GM13976 (cell line): ENCODE measurements at regions of chr1 and their contacts with region 1.

Region 1: DNA sequence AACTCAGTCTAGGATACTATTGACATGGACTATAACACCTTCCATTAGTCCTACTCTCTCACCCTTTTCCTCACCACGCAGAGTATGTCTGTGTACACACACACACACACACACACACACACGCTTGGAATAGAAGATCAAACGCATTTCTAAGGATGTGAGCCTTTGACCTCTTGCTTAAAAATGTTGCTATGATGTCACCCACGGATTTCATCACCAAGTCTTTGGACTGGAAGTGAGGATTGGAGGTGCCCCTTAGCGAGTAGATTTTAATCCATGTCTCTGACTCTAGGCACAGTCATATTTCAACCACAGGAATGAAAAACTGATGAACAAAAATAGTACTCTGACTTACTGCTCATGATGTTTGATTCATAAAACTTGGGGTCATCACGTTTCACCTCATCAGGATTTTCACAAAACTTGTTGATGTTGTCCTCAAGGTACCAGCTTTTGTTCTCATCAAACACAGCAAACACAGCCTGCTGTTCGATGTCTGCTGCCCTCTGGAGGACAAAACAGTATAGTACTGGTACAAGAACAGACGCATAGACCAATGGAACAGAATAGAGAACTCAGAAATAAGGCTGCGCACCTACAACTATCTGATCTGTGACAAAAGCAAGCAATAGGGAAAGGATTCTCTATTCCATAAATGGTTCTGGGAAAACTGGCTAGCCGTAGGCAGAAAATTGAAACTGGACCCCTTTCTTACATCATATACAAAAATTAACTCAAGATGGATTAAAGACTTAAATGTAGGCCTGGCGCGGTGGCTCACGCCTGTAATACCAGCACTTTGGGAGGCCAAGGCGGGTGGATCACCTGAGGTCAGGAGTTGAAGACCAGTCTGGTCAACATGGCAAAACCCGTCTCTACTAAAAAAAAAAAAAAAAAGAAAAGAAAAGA is 39.9 kb downstream of the F5 start:
- DNase-seq: peak; percentile 12
- CTCF ChIP-seq: peak; percentile 72

Region 2: DNA sequence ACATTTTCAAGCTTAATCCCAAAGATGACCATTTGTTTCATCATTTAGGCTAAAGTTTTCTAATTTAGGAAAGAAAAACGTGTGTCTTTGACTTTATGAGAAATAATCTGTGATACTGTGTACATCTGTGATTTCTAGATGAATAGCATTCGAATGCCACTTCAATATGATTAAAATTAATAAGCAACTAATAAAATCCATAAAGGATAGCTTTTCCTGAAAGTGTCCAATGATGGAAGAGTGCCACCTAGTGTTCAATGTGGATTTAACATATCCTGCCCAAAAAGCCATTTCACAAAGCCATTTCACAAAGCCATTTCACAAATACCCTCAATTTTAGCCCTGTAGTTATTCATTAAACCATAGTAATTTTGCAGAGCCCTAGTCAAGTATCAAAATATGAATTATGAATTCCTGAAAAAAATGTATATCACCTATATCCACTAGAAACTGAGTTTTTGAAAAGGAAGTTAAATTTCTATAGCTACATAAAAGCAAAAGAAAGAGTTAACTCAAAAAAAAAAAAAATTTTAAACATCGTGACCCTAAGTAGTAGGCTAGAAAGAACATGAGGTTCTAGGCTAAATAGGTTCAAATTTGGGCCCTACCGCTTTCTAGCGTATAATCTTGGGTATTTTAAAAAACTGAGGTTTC is 197.8 kb before region 1 on chr1:
- in situ Hi-C with region 1: no loop called
- DNase-seq: peak; percentile 26
- CTCF ChIP-seq: peak; percentile 69

Region 3: GRCh38 chr1:169466259-169467230 is 79.8 kb before region 1 on chr1:
- in situ Hi-C with region 1: loop called (anchors 10 kb)
- DNase-seq: no peak
- CTCF ChIP-seq: no peak

Region 4: DNA sequence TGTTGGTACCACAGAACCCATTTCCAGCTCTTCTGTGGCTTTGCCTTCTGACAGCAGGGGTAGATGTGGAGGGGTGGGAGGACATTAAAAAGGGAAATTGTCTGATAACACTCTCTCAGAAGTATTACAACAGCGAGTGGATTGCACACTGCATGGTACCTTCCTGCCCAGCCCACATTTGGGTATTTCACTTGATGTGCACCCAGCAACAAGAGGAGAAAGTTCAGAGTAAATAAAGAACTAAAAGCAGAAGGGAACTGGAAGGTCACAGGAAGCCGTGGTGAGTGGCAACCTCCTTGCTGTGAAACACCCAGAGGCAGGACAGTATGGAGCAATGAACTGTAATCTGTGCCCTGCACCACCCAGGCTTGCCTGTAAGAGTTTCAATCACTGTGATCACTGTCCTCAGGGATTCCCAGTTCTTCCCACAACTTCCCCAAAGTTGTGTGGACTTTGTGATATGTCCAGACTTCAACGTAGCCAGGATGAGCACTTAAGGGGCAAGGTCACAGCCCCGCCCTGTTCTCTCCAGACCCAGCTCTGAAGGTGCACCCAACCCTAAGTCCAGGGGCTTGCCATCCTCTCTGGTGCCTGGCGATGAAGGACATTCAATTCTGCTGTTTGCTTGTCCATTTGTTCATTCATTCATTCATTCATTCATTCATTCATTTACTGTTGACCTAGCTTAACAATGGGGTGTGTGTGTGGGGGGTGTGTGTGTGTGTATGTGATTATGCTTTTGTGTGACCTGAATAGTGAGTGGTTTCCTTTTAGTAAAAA is 58.6 kb after region 1 on chr1:
- in situ Hi-C with region 1: no loop called
- DNase-seq: no peak
- CTCF ChIP-seq: no peak

Region 5: DNA sequence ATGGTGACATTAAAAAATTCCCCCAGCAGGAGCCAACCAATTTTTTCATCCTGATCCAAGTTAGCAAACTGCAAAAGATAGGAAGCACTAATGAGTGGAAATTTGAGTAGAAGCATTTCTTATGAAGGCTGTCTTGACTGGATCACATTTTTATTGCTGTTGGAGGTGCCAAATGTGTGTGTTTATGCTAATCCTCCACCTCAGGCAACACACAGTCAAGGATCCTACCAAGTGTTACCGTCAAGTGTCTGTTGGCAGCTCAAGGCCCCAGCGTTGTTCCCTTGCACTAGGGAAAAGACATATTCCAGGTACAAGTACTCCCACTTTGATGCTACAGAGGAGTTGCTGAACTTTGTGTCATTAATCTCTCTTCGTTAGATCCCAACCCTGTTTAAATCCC is 230.1 kb after region 1 on chr1:
- in situ Hi-C with region 1: no loop called
- DNase-seq: no peak
- CTCF ChIP-seq: no peak